BJ (cell line): ENCODE measurements at regions of chr4 and their contacts with region 1.

Region 1: GRCh38 chr4:41214136-41214824 is at the start of gene APBB2:
- DNase-seq: no peak
- H3K4me3 ChIP-seq: peak within 1 kb of the TSS; percentile 77
- H3K27me3 ChIP-seq: no peaks in the 10 kb centered on the region
- CTCF ChIP-seq: peak; percentile 80
- polyA plus RNA-seq, gene APBB2: 50.3 and 52.9 TPM in 2 replicates

Region 2: DNA sequence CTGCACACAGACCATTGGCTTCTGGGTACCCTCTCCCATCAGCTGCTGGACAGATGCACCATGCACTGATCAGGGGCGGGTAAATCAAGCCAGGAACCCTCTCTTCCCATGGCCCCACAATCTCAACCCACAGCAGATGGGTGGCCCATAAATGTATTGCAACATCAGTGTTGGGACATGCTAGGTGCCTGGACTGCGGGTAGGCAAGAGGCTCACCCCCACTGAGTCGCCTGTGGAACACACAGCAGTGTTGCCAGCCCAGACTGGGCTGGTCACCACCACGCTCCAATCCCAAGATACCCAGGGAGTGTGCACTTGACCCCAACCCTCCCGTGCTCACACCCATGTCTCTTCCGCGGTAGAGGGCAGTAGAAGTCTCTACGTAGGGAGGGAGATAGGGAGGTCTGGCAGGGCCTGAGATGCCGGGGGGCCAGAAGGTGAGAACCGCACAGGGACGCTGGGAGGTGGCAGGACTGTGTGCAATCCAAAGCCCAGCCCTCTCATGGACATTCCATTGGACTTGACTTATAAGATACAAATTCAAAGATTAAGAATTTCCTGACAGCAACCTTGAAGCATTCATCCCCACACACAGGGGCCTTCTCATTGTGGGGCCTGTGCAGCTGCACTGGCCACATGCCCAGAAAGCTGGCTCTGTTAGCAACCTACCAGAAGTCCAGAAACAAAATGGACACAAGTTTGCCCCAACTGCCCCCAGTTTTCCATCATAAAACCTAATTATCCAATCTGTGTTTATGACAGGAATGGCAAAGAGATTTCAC is 280.8 kb before region 1 on chr4:
- CTCF ChIA-PET with region 1: interaction called, 10 read pairs
- POLR2A ChIA-PET with region 1: interaction called, 20 read pairs
- DNase-seq: no peak
- H3K4me3 ChIP-seq: no peak overlapping the region
- H3K27me3 ChIP-seq: no peaks in the 10 kb centered on the region
- CTCF ChIP-seq: no peak

Region 3: GRCh38 chr4:40976343-40976742 is 237.9 kb before region 1 on chr4:
- CTCF ChIA-PET with region 1: interaction called, 61 read pairs
- POLR2A ChIA-PET with region 1: no interaction called
- DNase-seq: no peak
- H3K4me3 ChIP-seq: no peak overlapping the region
- H3K27me3 ChIP-seq: no peaks in the 10 kb centered on the region
- CTCF ChIP-seq: peak; percentile 62

Region 4: DNA sequence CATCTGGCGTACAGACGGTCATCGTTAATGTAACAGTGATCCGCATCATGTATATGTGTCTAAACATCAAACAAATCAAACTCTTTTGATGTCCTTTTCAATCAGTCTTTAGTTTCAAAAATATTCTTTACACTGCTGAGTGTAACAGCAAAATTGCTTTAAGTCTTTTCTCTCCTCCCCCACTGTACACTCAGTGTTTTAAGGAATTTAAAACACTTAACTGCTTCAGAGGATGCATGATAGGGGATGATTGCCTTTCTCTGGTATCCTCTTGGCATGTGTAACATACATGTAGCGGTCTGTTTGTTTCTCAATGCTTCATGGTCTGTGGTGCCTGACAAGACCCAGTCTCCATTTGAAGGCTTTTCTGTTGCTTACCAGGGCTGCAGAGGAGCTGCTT is 365.2 kb after region 1 on chr4:
- CTCF ChIA-PET with region 1: no interaction called
- POLR2A ChIA-PET with region 1: no interaction called
- DNase-seq: no peak
- H3K4me3 ChIP-seq: no peak overlapping the region
- H3K27me3 ChIP-seq: no peaks in the 10 kb centered on the region
- CTCF ChIP-seq: no peak